ENCODE measurements at regions of chrX and their contacts with region 1.

Region 1: DNA sequence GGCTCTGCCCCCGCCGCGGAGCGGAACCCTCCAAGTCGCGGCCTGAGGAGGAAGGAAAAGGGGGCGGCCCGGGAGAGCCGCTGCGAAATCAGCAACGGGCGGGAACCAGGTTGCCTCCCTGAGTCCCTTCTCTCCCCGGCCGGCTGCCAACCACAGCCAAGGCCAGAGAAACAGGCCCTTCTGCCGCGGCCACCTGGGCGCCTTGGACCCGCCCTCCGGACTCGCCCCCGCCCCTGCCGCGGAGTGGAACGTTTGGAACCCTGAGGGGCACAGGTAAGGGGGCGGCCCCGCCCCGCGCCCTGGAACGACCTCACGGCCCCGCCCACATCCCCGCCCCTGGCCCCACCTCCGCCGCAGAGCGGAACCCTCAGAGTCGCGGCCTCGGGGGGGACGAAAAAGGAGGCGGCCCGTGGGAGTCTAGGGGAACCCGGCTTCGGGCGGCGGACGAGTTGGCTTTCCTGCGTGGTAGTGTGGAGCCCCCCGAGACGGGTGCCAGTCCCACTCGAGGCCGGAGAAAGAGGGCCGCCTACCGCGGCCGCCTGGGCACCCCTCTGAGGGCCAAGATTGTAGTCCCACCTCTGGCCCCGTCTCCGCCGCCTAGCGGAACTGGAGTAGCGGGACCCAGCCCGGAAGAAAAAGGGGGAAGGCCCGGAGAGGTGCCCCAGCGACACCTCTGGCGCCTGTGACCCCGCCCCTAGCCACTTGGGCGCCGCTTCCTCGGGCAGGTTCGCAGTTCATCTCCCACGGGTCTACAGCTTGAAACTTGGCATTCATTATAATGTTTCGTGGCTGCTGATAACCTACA is 669 bp upstream of the PHKA2 start:
- DNase-seq: peak; percentile 55 to 77
- ATAC-seq: peak; percentile 90 to 91
- H3K4me3 ChIP-seq: peak overlapping the region; percentile 73 to 86 (median 76)
- H3K27ac ChIP-seq: peak overlapping the region; percentile 88 to 96 (median 92)
- H3K4me1 ChIP-seq: peaks cover 5 to 10% of the 10 kb centered on the region in 2 donors
- H3K27me3 ChIP-seq: no peaks in the 10 kb centered on the region
- CTCF ChIP-seq: peak; percentile 67 to 72 (median 68)
- POLR2A ChIP-seq: peak; percentile 62 to 81

Region 2: DNA sequence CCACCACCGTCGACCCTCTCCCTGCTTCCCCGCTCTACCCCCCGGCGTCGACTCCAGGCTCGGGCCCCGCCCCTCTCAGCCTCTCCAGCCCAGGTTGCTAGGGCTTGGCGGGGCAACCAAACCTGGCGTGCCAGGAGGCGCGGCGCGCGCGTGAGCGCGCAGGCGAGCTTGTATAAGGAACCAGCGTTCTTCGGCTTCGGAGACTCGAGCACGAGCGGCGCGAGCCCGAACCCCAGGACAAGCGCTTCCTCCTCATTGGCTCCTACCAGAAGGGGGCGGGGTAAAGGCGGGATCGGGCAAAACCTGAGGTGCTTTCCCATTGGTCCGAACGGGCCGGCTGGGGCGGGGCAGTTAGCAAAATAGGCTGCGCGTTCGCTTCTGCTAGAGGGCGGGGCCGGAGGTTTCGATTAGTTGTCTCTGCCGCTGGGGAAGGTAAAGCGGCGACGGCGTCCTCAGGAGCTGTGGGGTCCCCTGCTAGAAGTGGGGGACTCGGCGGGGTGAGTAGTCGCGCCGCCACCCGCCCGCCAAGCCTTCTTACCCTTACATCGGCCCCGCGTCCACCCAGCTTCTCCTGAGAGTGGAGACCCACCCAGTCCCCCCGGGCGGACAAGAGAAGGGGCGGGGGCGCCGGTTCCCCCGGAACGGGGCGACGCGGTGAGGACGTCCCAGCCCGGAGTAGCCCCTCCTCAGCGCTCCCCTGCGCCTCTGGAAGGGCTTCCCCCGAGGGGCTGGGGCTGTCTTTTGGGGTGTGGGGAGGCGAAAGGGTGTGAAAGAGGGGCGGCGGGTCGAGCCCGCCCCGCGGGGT is 559.2 kb before region 1 on chrX and contains the start of gene CDKL5:
- in situ Hi-C with region 1: no loop called
- intact Hi-C with region 1: loop called (anchors 10 kb)
- DNase-seq: peak; percentile 95 to 96
- ATAC-seq: peak; percentile 99
- H3K4me3 ChIP-seq: peak within 1 kb of the TSS; percentile 71 to 93 (median 80)
- H3K27ac ChIP-seq: peak within 1 kb of the TSS; percentile 82 to 86 (median 84)
- H3K4me1 ChIP-seq: peaks cover 0 to 4% of the 10 kb centered on the region in 2 donors
- H3K27me3 ChIP-seq: no peaks in the 10 kb centered on the region
- CTCF ChIP-seq: no peak
- POLR2A ChIP-seq: peak; percentile 72 to 88
- total RNA-seq, gene CDKL5: 1.5 to 3.0 (median 2.8) TPM

Region 3: DNA sequence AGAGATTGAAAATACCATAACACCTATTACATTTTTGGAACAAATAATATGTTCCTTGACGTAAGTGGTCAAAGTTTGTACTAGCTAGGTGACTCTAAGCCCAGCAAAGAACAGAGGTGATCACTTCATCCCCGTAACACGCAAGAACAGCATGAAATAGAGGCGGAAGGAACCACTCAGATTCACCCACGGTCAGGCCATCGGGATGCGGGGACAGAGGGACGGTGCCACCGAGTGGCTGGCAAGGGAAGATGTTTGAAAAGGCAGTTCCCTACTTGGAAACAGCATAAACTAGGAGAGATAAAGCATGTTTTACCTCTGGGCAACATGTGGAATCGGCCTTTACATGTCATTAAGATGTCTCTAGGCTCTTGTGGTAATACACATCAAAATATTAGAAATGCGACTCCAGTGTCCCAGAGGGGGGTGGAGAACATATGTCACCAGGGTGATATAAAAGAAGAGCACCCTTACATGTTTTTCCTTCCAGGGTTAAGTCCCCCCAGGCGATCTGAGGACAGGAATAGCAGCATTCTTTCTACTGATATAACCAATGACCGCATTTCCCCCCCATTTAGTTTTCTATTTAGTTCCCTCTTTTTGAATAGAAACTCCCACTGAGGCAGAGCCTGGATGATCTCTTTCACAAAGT is 84.7 kb before region 1 on chrX:
- in situ Hi-C with region 1: no loop called
- intact Hi-C with region 1: no loop called
- DNase-seq: no peak
- ATAC-seq: no peak
- H3K4me3 ChIP-seq: no peak overlapping the region
- H3K27ac ChIP-seq: peak overlapping the region in 2 of 4 donors; percentile 27 to 68
- H3K4me1 ChIP-seq: peaks cover 2 to 4% of the 10 kb centered on the region in 2 donors
- H3K27me3 ChIP-seq: no peaks in the 10 kb centered on the region
- CTCF ChIP-seq: peak in 2 of 5 experiments; percentile 23 to 29
- POLR2A ChIP-seq: no peak

Region 4: GRCh38 chrX:18931972-18932371 is 52.6 kb before region 1 on chrX:
- in situ Hi-C with region 1: no loop called
- intact Hi-C with region 1: loop called (anchors 5 kb)
- DNase-seq: no peak
- ATAC-seq: no peak
- H3K4me3 ChIP-seq: no peak overlapping the region
- H3K27ac ChIP-seq: no peak overlapping the region
- H3K4me1 ChIP-seq: no peaks in the 10 kb centered on the region
- H3K27me3 ChIP-seq: no peaks in the 10 kb centered on the region
- CTCF ChIP-seq: peak in 2 of 5 experiments; percentile 21 to 33
- POLR2A ChIP-seq: no peak

Region 5: GRCh38 chrX:20252381-20253231 is 1268.0 kb after region 1 on chrX:
- in situ Hi-C with region 1: no loop called
- intact Hi-C with region 1: loop called (anchors 10 kb)
- DNase-seq: peak; percentile 4 to 44
- ATAC-seq: peak; percentile 36 to 77
- H3K4me3 ChIP-seq: no peak overlapping the region
- H3K27ac ChIP-seq: peak overlapping the region in 3 of 4 donors; percentile 34 to 74 (median 73)
- H3K4me1 ChIP-seq: peaks cover 5 to 18% of the 10 kb centered on the region in 2 donors
- H3K27me3 ChIP-seq: no peaks in the 10 kb centered on the region
- CTCF ChIP-seq: peak; percentile 40 to 68 (median 52)
- POLR2A ChIP-seq: no peak

Measured in gastrocnemius medialis (tissue), 4 donors.